ENCODE measurements at regions of chr4 and their contacts with region 1.

Region 1: DNA sequence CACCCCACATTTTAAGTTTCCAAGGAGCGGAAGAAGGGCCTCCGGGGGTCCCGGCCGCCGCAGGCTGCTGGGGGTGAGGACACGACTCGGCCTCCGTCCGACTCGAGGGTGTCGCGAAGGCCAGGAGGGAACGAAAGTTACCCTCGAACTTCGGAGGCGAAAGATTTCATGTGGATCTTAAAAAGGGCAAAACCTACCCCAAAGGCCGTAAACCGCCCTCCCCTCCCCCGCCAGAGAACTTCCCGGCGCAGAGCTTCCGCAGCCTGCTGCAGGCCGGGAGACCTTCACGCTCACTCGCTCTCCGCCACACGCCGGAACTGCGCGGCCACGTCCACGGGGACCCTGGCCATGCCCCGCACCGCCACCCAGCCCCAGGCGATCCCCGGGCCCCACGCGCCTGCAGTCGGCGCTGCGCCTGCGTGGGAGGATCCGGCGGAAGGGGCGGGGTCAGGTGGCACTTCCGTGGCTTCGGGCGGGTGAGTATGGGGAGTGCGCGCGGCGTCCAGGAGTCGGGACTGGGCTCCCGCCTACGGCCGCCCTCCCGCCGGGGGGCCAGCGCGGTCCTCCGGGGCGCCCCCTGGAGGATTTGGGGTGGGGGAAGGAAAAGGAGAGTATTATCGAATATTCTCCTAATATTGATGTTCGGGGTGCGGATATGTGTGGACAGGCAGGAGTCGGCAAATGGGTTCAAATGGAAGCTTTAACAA is at the start of gene MMAA:
- DNase-seq: peak; percentile 86 to 97 (median 94)
- ATAC-seq: peak; percentile 93
- H3K4me3 ChIP-seq: peak within 1 kb of the TSS; percentile 89 to 97
- H3K4me3 Mint-ChIP-seq: peak within 1 kb of the TSS; percentile 96
- H3K27ac ChIP-seq: peak within 1 kb of the TSS; percentile 91 to 97
- H3K27ac Mint-ChIP-seq: peak within 1 kb of the TSS; percentile 98
- H3K4me1 ChIP-seq: peaks cover 22% of the 10 kb centered on the region
- H3K4me1 Mint-ChIP-seq: peaks cover 45% of the 10 kb centered on the region
- H3K27me3 ChIP-seq: no peaks in the 10 kb centered on the region
- H3K27me3 Mint-ChIP-seq: no peaks in the 10 kb centered on the region
- CTCF ChIP-seq: peak; percentile 38
- total RNA-seq, gene MMAA: 7.6 to 9.4 TPM

Region 2: DNA sequence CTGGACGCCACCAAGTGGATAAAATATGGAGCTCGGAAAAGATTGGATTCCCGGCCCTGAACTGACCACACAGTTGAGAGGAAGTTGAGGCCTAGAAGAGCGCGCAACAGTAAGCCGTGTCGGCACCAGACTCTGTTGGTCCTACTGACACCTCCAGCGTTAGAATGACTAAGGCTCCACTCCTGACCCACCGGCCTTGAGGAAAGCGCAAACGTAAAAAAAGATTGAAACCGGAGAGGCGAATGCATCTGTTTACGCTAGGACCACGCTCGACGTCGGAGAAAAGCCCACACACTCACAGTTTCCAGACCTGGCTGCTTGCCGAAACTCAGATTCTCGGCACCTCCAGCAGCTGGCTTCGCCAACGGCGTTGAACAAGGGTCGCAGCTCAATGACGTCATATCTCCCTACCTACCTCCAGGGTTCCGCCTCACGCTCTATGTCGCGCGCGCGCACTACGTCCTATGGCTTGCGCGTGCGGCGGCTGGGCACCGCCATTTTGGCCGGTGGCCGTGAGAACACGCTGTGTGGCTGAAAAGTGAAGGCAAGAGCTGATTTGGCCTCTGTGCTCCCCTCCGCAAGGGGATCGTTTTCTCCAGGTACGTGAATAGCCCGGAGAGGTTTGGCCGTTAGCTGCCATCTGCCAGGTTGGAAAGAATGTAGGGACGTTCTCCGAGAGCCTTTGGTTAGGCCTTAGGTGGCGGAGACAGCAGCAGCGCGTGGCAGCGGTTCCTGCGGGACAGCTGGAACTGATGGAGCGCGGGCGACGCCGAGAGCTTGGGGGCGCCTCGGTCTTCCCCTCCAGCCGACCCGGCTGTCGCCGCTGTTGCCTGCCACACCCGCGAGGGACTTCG is 521.0 kb before region 1 on chr4 and contains the starts of genes ABCE1 and ANAPC10:
- CTCF ChIA-PET with region 1: interaction called, 4 read pairs
- POLR2A ChIA-PET with region 1: interaction called, 4 read pairs
- intact Hi-C with region 1: loop called (anchors 1 kb)
- DNase-seq: peak; percentile 84 to 99 (median 97)
- ATAC-seq: peak; percentile 89
- H3K4me3 ChIP-seq: peak within 1 kb of the TSS; percentile 70 to 81
- H3K4me3 Mint-ChIP-seq: peak within 1 kb of the TSS; percentile 95
- H3K27ac ChIP-seq: peak within 1 kb of the TSS; percentile 88 to 91
- H3K27ac Mint-ChIP-seq: peak within 1 kb of the TSS; percentile 98
- H3K4me1 ChIP-seq: peaks cover 41% of the 10 kb centered on the region
- H3K4me1 Mint-ChIP-seq: peaks cover 46% of the 10 kb centered on the region
- H3K27me3 ChIP-seq: no peaks in the 10 kb centered on the region
- H3K27me3 Mint-ChIP-seq: no peaks in the 10 kb centered on the region
- CTCF ChIP-seq: no peak
- total RNA-seq, gene ABCE1: 68.8 to 70.9 TPM
- total RNA-seq, gene ANAPC10: 24.5 to 26.7 TPM

Region 3: GRCh38 chr4:145154573-145154972 is 464.5 kb before region 1 on chr4:
- CTCF ChIA-PET with region 1: interaction called, 3 read pairs
- POLR2A ChIA-PET with region 1: no interaction called
- intact Hi-C with region 1: loop called in 1 of 2 experiments (anchors 10 kb)
- DNase-seq: peak in 2 of 9 experiments; percentile 27 to 46
- ATAC-seq: no peak
- H3K4me3 ChIP-seq: no peak overlapping the region
- H3K4me3 Mint-ChIP-seq: no peak overlapping the region
- H3K27ac ChIP-seq: no peak overlapping the region
- H3K27ac Mint-ChIP-seq: no peak overlapping the region
- H3K4me1 ChIP-seq: no peaks in the 10 kb centered on the region
- H3K4me1 Mint-ChIP-seq: peaks cover 8% of the 10 kb centered on the region
- H3K27me3 ChIP-seq: no peaks in the 10 kb centered on the region
- H3K27me3 Mint-ChIP-seq: no peaks in the 10 kb centered on the region
- CTCF ChIP-seq: no peak

Region 4: DNA sequence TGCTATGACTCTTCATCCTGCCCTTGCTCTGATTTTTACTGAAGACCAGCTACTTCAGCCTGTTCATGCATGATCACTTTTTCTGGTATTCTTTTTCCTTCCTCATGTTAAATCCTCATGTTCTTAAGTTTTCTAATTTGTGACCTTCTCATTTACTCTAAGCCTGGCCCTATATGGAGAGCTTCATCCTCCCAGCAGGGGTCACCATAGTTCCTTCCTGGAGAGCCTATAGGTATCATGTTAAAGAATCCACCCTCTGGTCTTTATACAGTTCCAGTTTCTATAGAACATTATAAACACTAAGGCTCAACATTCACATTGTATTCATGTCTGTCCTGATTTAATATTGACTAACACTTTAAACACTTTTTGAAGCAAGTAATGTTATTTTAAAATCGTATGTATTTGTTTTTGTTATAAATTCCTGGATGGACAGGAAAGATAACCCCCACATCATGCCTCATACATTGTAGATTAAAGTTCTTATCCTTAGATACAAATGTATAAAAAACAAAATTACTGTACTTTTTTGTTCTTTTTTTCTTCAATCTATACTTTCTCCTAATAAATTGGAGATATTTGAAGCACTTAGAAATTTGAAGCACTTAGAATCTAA is 384.9 kb before region 1 on chr4:
- CTCF ChIA-PET with region 1: interaction called, 25 read pairs
- POLR2A ChIA-PET with region 1: no interaction called
- intact Hi-C with region 1: loop called (anchors 1 to 2 kb)
- DNase-seq: peak; percentile 4 to 75 (median 48)
- ATAC-seq: peak; percentile 83
- H3K4me3 ChIP-seq: no peak overlapping the region
- H3K4me3 Mint-ChIP-seq: no peak overlapping the region
- H3K27ac ChIP-seq: no peak overlapping the region
- H3K27ac Mint-ChIP-seq: no peak overlapping the region
- H3K4me1 ChIP-seq: no peaks in the 10 kb centered on the region
- H3K4me1 Mint-ChIP-seq: no peaks in the 10 kb centered on the region
- H3K27me3 ChIP-seq: no peaks in the 10 kb centered on the region
- H3K27me3 Mint-ChIP-seq: peaks cover 2% of the 10 kb centered on the region
- CTCF ChIP-seq: peak; percentile 66

Region 5: GRCh38 chr4:145732895-145733880 is 114.1 kb after region 1 on chr4:
- CTCF ChIA-PET with region 1: no interaction called
- POLR2A ChIA-PET with region 1: no interaction called
- intact Hi-C with region 1: loop called (anchors 1 to 5 kb)
- DNase-seq: peak; percentile 58 to 92 (median 83)
- ATAC-seq: peak; percentile 98
- H3K4me3 ChIP-seq: peak overlapping the region; percentile 71 to 73
- H3K4me3 Mint-ChIP-seq: peak overlapping the region; percentile 80
- H3K27ac ChIP-seq: peak overlapping the region in 1 of 2 experiments; percentile 45
- H3K27ac Mint-ChIP-seq: peak overlapping the region; percentile 29
- H3K4me1 ChIP-seq: peaks cover 3% of the 10 kb centered on the region
- H3K4me1 Mint-ChIP-seq: peaks cover 9% of the 10 kb centered on the region
- H3K27me3 ChIP-seq: no peaks in the 10 kb centered on the region
- H3K27me3 Mint-ChIP-seq: peaks cover 4% of the 10 kb centered on the region
- CTCF ChIP-seq: no peak

Region 6: DNA sequence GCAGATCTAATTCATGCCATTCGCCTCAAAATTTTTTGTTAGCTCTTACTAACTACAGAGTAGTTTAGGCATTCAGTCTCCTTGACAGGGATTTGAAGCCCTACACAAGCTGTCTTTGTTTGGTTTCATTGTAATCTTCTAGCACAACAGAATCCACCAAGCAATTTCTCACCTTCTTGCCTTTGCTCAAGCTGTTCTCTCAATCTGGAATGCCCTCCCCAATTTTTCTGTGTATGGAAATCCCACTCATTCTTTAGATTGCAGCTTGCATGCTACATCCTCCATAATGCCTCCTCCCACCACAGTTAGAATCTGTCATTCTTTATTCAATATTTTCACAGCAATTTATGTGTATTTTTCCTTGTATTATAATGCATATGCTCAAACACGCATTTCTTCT is 124.6 kb after region 1 on chr4:
- CTCF ChIA-PET with region 1: no interaction called
- POLR2A ChIA-PET with region 1: no interaction called
- intact Hi-C with region 1: no loop called
- DNase-seq: no peak
- ATAC-seq: no peak
- H3K4me3 ChIP-seq: no peak overlapping the region
- H3K4me3 Mint-ChIP-seq: no peak overlapping the region
- H3K27ac ChIP-seq: no peak overlapping the region
- H3K27ac Mint-ChIP-seq: no peak overlapping the region
- H3K4me1 ChIP-seq: no peaks in the 10 kb centered on the region
- H3K4me1 Mint-ChIP-seq: no peaks in the 10 kb centered on the region
- H3K27me3 ChIP-seq: no peaks in the 10 kb centered on the region
- H3K27me3 Mint-ChIP-seq: peaks cover 6% of the 10 kb centered on the region
- CTCF ChIP-seq: no peak

Region 7: GRCh38 chr4:146175541-146176453 is 556.7 kb after region 1 on chr4 and contains the start of gene LSM6:
- CTCF ChIA-PET with region 1: interaction called, 3 read pairs
- POLR2A ChIA-PET with region 1: no interaction called
- intact Hi-C with region 1: loop called (anchors 2 to 5 kb)
- DNase-seq: peak; percentile 60 to 92 (median 79)
- ATAC-seq: peak; percentile 90
- H3K4me3 ChIP-seq: peak within 1 kb of the TSS; percentile 88 to 97
- H3K4me3 Mint-ChIP-seq: peak within 1 kb of the TSS; percentile 91
- H3K27ac ChIP-seq: peak within 1 kb of the TSS; percentile 69 to 83
- H3K27ac Mint-ChIP-seq: peak within 1 kb of the TSS; percentile 95
- H3K4me1 ChIP-seq: peaks cover 48% of the 10 kb centered on the region
- H3K4me1 Mint-ChIP-seq: peaks cover 59% of the 10 kb centered on the region
- H3K27me3 ChIP-seq: no peaks in the 10 kb centered on the region
- H3K27me3 Mint-ChIP-seq: no peaks in the 10 kb centered on the region
- CTCF ChIP-seq: no peak
- total RNA-seq, gene LSM6: 17.6 to 20.6 TPM

Region 8: GRCh38 chr4:146514651-146515357 is 895.7 kb after region 1 on chr4:
- CTCF ChIA-PET with region 1: no interaction called
- POLR2A ChIA-PET with region 1: no interaction called
- intact Hi-C with region 1: loop called (anchors 5 kb)
- DNase-seq: no peak
- ATAC-seq: no peak
- H3K4me3 ChIP-seq: no peak overlapping the region
- H3K4me3 Mint-ChIP-seq: no peak overlapping the region
- H3K27ac ChIP-seq: no peak overlapping the region
- H3K27ac Mint-ChIP-seq: no peak overlapping the region
- H3K4me1 ChIP-seq: no peaks in the 10 kb centered on the region
- H3K4me1 Mint-ChIP-seq: peaks cover 14% of the 10 kb centered on the region
- H3K27me3 ChIP-seq: no peaks in the 10 kb centered on the region
- H3K27me3 Mint-ChIP-seq: no peaks in the 10 kb centered on the region
- CTCF ChIP-seq: no peak

Measured in CD8-positive, alpha-beta T cell (primary cell).